Pancreas (tissue), 10 donors: ENCODE measurements at regions of chr17 and their contacts with region 1.

Region 1: GRCh38 chr17:74961657-74962490 is 10.7 kb downstream of the HID1 start:
- DNase-seq: peak; percentile 79 to 93 (median 89)
- ATAC-seq: peak; percentile 74 to 90 (median 84)
- H3K4me3 ChIP-seq: no peak overlapping the region
- H3K27ac ChIP-seq: no peak overlapping the region
- H3K4me1 ChIP-seq: peaks cover 0 to 8% (median 0%) of the 10 kb centered on the region in 3 donors
- H3K27me3 ChIP-seq: no peaks in the 10 kb centered on the region
- CTCF ChIP-seq: peak; percentile 53 to 77 (median 70)

Region 2: DNA sequence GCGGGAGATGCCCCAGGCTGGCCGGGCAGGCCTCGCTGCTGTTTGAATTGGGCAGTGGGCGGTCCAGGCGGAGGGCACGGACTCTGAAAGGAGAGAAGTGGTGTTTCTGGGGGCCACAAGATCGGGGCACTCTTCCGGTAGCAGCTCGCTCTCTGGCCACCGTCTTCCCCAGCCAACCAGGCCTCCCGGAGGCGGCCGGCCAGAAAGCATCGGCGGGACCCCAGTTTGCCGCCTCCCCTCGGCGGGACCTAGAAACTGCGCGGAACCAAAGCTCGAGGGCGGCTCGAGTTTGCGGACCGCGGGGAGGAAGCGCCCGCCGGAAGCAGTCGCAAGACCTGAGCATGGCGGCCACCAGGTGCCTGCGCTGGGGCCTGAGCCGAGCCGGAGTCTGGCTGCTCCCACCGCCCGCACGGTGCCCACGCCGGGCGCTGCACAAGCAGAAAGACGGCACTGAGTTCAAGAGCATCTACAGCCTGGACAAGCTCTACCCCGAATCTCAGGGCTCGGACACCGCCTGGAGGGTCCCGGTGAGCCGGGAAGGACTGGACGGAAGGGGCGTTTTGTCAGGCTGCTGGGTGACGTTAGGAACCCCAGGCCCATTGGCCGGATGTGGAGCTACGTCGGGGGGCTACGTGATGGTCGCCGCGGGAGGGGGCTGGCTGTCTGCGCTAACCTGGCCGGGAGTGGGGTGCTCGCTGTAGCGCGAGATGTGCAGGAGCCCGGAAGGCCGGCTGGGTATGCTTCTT is 50.6 kb after region 1 on chr17 and contains the start of gene MRPL58:
- intact Hi-C with region 1: loop called in 1 of 3 experiments (anchors 10 kb)
- DNase-seq: peak; percentile 74 to 93 (median 82)
- ATAC-seq: peak; percentile 93 to 97 (median 96)
- H3K4me3 ChIP-seq: peak within 1 kb of the TSS; percentile 71 to 91 (median 84)
- H3K27ac ChIP-seq: peak within 1 kb of the TSS; percentile 62 to 84 (median 72)
- H3K4me1 ChIP-seq: peaks cover 11 to 15% (median 12%) of the 10 kb centered on the region in 3 donors
- H3K27me3 ChIP-seq: no peaks in the 10 kb centered on the region
- CTCF ChIP-seq: peak in 3 of 4 donors; percentile 28 to 47 (median 43)
- total RNA-seq, gene MRPL58: 11.7 to 22.2 (median 14.1) TPM